Vagina (tissue), 2 donors: ENCODE measurements at regions of chr2 and their contacts with region 1.

Region 1: GRCh38 chr2:26745609-26746327 is 18.3 kb upstream of the SLC35F6 start:
- DNase-seq: no peak
- H3K4me3 ChIP-seq: no peak overlapping the region
- H3K27ac ChIP-seq: no peak overlapping the region
- H3K4me1 ChIP-seq: peaks cover 4% of the 10 kb centered on the region
- H3K27me3 ChIP-seq: no peaks in the 10 kb centered on the region
- CTCF ChIP-seq: peak; percentile 85 to 95 (median 95)
- POLR2A ChIP-seq: no peak

Region 2: DNA sequence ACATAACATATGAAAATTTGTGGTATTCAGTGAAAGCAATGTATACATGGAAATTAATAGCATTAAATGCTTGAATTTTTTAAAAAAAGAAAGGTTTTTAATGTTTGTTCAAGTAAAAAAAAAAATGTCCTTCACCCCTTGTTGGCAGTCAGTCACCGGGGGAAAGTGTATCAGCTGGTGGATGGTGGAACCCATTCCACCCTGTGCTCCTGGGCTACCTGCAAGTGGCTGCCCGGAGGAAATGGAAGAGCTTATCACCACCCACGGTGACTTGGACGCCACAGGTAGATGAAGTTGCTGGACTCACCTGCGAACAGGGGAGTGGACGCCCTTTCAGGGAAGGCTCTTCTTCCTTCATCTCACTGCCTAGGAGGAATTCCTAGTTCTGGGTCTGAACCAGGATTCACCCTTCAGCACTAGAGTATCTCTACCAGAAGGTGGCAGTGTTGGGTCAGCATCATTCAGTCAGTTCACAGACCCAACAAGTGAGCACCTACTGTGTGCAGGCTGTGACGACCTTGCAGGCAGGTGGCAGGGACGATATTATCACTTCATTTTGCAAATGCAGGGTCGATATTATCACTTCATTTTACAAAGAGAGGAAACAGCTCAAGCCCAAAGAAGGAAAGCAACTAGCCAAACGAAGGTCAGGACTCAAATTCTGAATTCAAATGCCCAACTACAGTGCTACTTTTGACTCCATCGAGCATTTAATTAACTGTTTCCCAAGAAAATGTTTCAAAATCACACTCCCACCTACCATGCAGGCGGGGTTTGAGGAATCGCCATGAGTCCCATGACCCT is 140.4 kb before region 1 on chr2:
- intact Hi-C with region 1: loop called (anchors 5 kb)
- DNase-seq: peak in 1 of 2 donors; percentile 94
- H3K4me3 ChIP-seq: no peak overlapping the region
- H3K27ac ChIP-seq: peak overlapping the region; percentile 39
- H3K4me1 ChIP-seq: peaks cover 12% of the 10 kb centered on the region
- H3K27me3 ChIP-seq: no peaks in the 10 kb centered on the region
- CTCF ChIP-seq: peak; percentile 70 to 88 (median 78)
- POLR2A ChIP-seq: no peak

Region 3: DNA sequence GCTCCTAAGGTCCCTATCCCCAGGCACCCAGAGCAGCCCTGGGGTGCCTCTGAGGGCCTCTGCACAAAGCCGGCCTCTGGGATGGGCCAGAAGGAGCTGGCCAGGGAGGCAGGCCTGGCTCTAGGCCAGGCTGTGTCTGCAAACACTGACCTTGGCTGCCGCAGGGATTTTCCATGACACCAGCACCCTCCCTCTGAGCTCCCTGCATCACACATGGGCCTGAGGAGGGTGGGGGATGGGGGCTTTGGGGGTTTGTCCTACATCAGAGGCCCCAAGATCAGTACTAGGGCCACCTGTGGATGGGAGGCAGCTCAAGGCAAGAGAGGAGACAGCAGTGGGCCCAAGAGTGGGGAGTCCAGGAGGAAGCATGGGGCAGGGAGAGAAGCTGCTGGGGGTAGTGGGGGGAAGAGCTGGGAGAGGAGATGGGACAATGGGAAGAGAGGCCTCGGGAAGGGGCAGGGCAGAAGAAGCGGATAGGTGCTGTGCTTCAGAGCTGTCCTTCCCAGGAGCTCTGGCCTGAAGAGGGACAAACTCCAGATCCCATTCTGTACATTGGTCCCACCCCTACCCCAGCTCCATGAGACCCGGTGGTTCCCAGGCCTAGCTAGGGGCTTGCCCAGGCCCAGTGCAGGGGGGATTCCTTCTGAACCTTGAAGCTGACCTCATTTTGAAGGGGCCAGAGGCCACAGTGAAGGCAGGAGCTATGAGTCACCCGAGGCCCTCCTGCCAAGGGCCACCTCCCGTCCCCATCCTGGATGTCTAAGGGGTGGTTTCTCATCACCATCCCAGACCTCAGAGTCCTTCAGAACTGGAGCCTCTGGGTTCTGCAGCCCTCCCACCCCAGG is 25.2 kb before region 1 on chr2:
- intact Hi-C with region 1: no loop called
- DNase-seq: no peak
- H3K4me3 ChIP-seq: no peak overlapping the region
- H3K27ac ChIP-seq: peak overlapping the region; percentile 58
- H3K4me1 ChIP-seq: peaks cover 25% of the 10 kb centered on the region
- H3K27me3 ChIP-seq: no peaks in the 10 kb centered on the region
- CTCF ChIP-seq: no peak
- POLR2A ChIP-seq: no peak